CD4-positive, alpha-beta memory T cell (primary cell): ENCODE measurements at regions of chr14 and their contacts with region 1.

Region 1: DNA sequence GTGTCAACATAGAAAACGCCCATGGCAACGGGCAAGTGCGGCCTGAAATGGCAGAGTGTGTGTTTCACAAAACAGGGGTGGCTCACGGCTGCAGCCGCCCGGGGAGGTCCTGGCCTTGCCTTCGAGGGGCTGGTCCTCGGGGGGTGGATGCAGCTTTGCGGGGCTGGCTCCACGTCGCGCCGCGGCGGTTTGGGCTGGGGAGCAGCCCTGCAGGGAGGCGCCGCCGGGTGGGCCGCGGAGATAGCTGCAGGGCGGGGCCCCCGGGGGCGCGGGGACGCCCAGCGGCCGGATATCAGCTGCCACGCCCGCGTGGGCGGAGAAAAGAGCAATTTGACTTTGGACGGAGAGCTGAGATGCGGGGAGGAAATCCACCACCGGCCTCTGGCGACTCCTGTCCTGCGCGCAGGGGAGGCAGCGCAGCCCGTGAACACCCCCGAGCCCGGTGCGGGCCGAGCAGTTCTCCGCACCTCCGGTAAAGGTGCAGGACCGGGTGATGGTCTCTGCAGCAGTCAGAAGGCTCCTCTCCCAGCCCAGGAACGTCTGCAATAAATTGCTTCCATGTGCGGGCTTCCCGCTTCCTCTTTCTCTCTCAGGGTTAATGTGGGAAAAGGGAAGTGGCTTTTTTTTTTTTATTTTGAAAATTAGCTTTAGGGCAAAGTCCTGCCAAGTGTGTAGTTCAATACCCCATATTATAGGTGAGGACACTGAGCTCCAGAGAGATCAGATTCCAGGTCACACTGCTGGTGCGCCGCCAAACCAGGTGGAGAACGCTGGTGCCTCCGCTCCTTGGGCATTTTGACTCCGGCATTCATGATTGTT is 110.5 kb downstream of the ARF6 start:
- DNase-seq: peak; percentile 76 to 87 (median 79)
- H3K4me3 ChIP-seq: peak overlapping the region; percentile 65 to 69
- H3K4me3 Mint-ChIP-seq: peak overlapping the region; percentile 83 to 96 (median 87)
- H3K27ac ChIP-seq: peak overlapping the region; percentile 94
- H3K27ac Mint-ChIP-seq: peak overlapping the region; percentile 96 to 99 (median 98)
- H3K4me1 ChIP-seq: peaks cover 57% of the 10 kb centered on the region
- H3K4me1 Mint-ChIP-seq: peaks cover 43 to 64% (median 52%) of the 10 kb centered on the region in 4 donors
- H3K27me3 ChIP-seq: no peaks in the 10 kb centered on the region
- H3K27me3 Mint-ChIP-seq: no peaks in the 10 kb centered on the region

Region 2: GRCh38 chr14:49892636-49893308 is 110.7 kb before region 1 on chr14 and contains the start of gene ARF6:
- CTCF ChIA-PET with region 1: interaction called, 13 read pairs
- POLR2A ChIA-PET with region 1: interaction called, 136 read pairs
- intact Hi-C with region 1: loop called (anchors 1 kb)
- DNase-seq: peak; percentile 92 to 94 (median 92)
- H3K4me3 ChIP-seq: peak within 1 kb of the TSS; percentile 75 to 100
- H3K4me3 Mint-ChIP-seq: peak within 1 kb of the TSS; percentile 95 to 99 (median 98)
- H3K27ac ChIP-seq: peak within 1 kb of the TSS; percentile 98
- H3K27ac Mint-ChIP-seq: peak within 1 kb of the TSS; percentile 93 to 100 (median 99)
- H3K4me1 ChIP-seq: peaks cover 35% of the 10 kb centered on the region
- H3K4me1 Mint-ChIP-seq: peaks cover 13 to 45% (median 22%) of the 10 kb centered on the region in 4 donors
- H3K27me3 ChIP-seq: no peaks in the 10 kb centered on the region
- H3K27me3 Mint-ChIP-seq: no peaks in the 10 kb centered on the region
- total RNA-seq, gene ARF6: 116 to 124 TPM

Region 3: GRCh38 chr14:49940808-49941421 is 62.5 kb before region 1 on chr14:
- CTCF ChIA-PET with region 1: interaction called, 20 read pairs
- POLR2A ChIA-PET with region 1: interaction called, 130 read pairs
- intact Hi-C with region 1: loop called (anchors 1 kb)
- DNase-seq: peak in 4 of 5 donors; percentile 40 to 56 (median 48)
- H3K4me3 ChIP-seq: peak overlapping the region in 1 of 2 donors; percentile 15
- H3K4me3 Mint-ChIP-seq: peak overlapping the region; percentile 60 to 86 (median 68)
- H3K27ac ChIP-seq: peak overlapping the region; percentile 23
- H3K27ac Mint-ChIP-seq: peak overlapping the region; percentile 31 to 93 (median 88)
- H3K4me1 ChIP-seq: peaks cover 52% of the 10 kb centered on the region
- H3K4me1 Mint-ChIP-seq: peaks cover 44 to 72% (median 61%) of the 10 kb centered on the region in 4 donors
- H3K27me3 ChIP-seq: no peaks in the 10 kb centered on the region
- H3K27me3 Mint-ChIP-seq: no peaks in the 10 kb centered on the region

Region 4: DNA sequence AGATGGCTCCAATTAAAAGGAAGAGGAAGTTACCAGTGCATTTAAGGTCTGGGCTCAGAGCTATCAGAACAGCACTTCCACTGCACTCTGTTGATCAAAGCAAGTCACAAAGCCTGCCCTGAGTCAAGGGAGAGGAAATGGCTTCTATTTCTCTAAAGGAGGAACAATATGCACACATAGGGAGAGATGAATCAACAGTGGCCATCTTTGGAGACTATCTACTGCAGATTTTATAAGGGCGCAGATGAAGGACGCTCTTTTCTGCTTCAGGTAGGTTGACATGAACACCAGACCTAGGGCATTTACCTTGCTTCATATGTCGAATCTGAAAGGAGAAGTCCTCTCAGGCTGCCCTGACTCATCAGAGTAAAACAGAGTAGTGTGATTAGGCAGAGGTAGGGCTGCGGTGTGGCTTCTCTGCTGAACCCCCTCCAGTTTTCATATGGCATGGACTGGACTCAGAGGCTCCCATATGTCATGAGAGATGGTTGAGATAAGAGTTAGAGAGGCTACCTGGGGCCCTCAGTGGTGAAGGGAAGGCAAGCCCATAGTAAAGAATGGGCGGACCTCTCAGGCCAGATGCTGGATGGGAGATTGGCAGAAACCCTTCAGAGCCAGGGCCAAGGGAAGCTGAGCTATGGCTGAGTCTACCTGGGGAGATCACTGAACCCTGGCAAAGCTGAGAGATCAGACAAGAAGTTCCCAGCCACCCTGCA is 26.1 kb before region 1 on chr14:
- CTCF ChIA-PET with region 1: interaction called, 72 read pairs
- POLR2A ChIA-PET with region 1: interaction called, 486 read pairs
- intact Hi-C with region 1: loop called (anchors 1 kb)
- DNase-seq: peak; percentile 48 to 66 (median 61)
- H3K4me3 ChIP-seq: peak overlapping the region; percentile 50 to 53
- H3K4me3 Mint-ChIP-seq: peak overlapping the region; percentile 75 to 89 (median 84)
- H3K27ac ChIP-seq: peak overlapping the region; percentile 48
- H3K27ac Mint-ChIP-seq: peak overlapping the region; percentile 91 to 95 (median 93)
- H3K4me1 ChIP-seq: peaks cover 100% of the 10 kb centered on the region
- H3K4me1 Mint-ChIP-seq: peaks cover 60 to 96% (median 87%) of the 10 kb centered on the region in 4 donors
- H3K27me3 ChIP-seq: no peaks in the 10 kb centered on the region
- H3K27me3 Mint-ChIP-seq: no peaks in the 10 kb centered on the region

Region 5: DNA sequence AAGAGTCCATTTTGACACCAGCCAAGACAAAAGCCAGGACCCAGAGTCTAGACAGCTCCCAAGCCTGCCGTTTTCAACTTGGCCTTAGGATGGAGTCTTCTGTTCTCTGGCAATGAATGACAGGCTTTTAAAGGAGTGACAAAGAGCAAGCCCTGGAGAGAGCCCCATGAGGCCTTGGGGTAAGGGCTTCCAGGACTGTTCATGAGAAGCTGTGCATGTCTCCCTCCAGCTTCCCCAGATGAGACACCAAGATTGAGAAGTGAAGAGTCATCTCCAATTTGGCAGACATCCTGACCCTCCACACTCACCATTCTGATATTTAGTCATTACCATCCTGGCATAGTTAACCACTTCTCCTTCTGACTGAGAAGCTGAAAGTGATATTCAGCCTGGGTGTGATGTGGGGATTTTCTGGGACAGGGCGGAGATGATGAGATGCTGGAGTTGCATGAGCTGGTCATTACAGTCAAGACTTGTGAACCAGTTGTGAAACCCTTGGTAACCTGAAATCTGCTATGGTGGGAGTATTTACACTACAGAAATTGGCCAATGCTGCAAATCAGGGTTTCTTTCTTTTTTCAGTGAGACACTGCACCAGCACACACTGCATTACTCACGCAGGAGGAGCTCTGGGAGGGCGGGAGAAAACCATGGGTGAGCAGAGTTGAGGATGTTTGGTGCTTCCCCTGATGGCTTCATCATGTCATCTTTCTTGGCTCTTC is 35.1 kb after region 1 on chr14:
- CTCF ChIA-PET with region 1: interaction called, 27 read pairs
- POLR2A ChIA-PET with region 1: interaction called, 293 read pairs
- intact Hi-C with region 1: loop called (anchors 1 kb)
- DNase-seq: peak in 2 of 5 donors; percentile 10 to 63
- H3K4me3 ChIP-seq: no peak overlapping the region
- H3K4me3 Mint-ChIP-seq: peak overlapping the region in 7 of 8 donors; percentile 37 to 92 (median 73)
- H3K27ac ChIP-seq: peak overlapping the region; percentile 28
- H3K27ac Mint-ChIP-seq: peak overlapping the region; percentile 81 to 96 (median 93)
- H3K4me1 ChIP-seq: peaks cover 59% of the 10 kb centered on the region
- H3K4me1 Mint-ChIP-seq: peaks cover 38 to 71% (median 57%) of the 10 kb centered on the region in 4 donors
- H3K27me3 ChIP-seq: no peaks in the 10 kb centered on the region
- H3K27me3 Mint-ChIP-seq: no peaks in the 10 kb centered on the region

Region 6: GRCh38 chr14:50099335-50099734 is 95.9 kb after region 1 on chr14:
- CTCF ChIA-PET with region 1: interaction called, 14 read pairs
- POLR2A ChIA-PET with region 1: interaction called, 19 read pairs
- intact Hi-C with region 1: no loop called
- DNase-seq: peak in 1 of 5 donors; percentile 25
- H3K4me3 ChIP-seq: no peak overlapping the region
- H3K4me3 Mint-ChIP-seq: peak overlapping the region in 5 of 8 donors; percentile 7 to 38 (median 28)
- H3K27ac ChIP-seq: no peak overlapping the region
- H3K27ac Mint-ChIP-seq: peak overlapping the region; percentile 10 to 92 (median 80)
- H3K4me1 ChIP-seq: peaks cover 69% of the 10 kb centered on the region
- H3K4me1 Mint-ChIP-seq: peaks cover 41 to 68% (median 54%) of the 10 kb centered on the region in 4 donors
- H3K27me3 ChIP-seq: no peaks in the 10 kb centered on the region
- H3K27me3 Mint-ChIP-seq: no peaks in the 10 kb centered on the region

Region 7: GRCh38 chr14:50210074-50210473 is 206.7 kb after region 1 on chr14:
- CTCF ChIA-PET with region 1: no interaction called
- POLR2A ChIA-PET with region 1: no interaction called
- intact Hi-C with region 1: no loop called
- DNase-seq: no peak
- H3K4me3 ChIP-seq: no peak overlapping the region
- H3K4me3 Mint-ChIP-seq: no peak overlapping the region
- H3K27ac ChIP-seq: no peak overlapping the region
- H3K27ac Mint-ChIP-seq: no peak overlapping the region
- H3K4me1 ChIP-seq: no peaks in the 10 kb centered on the region
- H3K4me1 Mint-ChIP-seq: peaks cover 10 to 28% (median 16%) of the 10 kb centered on the region in 4 donors
- H3K27me3 ChIP-seq: no peaks in the 10 kb centered on the region
- H3K27me3 Mint-ChIP-seq: no peaks in the 10 kb centered on the region